ENCODE measurements at regions of chr3 and their contacts with region 1.

Region 1: DNA sequence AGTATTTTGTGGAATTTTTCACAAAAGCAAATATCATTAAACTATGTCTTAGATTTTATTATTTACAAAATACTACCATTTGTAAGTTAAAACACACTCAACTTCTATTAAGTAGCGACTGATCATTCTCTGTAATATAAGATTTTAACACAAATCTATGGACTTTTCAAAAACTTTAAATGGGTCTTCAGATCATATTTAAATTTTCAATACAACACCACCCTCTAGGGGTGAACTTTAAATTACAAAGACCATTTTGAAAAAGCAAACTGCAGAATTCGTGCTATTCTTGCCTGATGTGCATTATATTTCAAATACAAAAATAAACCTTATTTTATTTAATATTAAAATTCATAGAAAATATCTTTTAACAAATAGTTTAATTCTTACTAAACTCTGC is 8.2 kb upstream of the VGLL4 start:
- DNase-seq: no peak
- H3K4me3 ChIP-seq: no peak overlapping the region
- H3K27ac ChIP-seq: no peak overlapping the region
- H3K4me1 ChIP-seq: peaks cover 0 to 6% (median 2%) of the 10 kb centered on the region in 6 donors
- H3K27me3 ChIP-seq: no peaks in the 10 kb centered on the region
- CTCF ChIP-seq: peak; percentile 15 to 72 (median 60)
- POLR2A ChIP-seq: no peak

Region 2: GRCh38 chr3:11236595-11237461 is 415.1 kb before region 1 on chr3:
- intact Hi-C with region 1: loop called (anchors 10 kb)
- DNase-seq: peak; percentile 88
- H3K4me3 ChIP-seq: no peak overlapping the region
- H3K27ac ChIP-seq: no peak overlapping the region
- H3K4me1 ChIP-seq: peaks cover 0 to 8% (median 2%) of the 10 kb centered on the region in 6 donors
- H3K27me3 ChIP-seq: peaks cover 0 to 22% (median 0%) of the 10 kb centered on the region in 7 donors
- CTCF ChIP-seq: peak; percentile 29 to 87 (median 77)
- POLR2A ChIP-seq: no peak

Region 3: GRCh38 chr3:11379233-11379823 is 272.6 kb before region 1 on chr3:
- intact Hi-C with region 1: loop called (anchors 2 kb)
- DNase-seq: no peak
- H3K4me3 ChIP-seq: peak overlapping the region in 2 of 8 donors; percentile 4 to 16
- H3K27ac ChIP-seq: peak overlapping the region in 6 of 8 donors; percentile 14 to 68 (median 45)
- H3K4me1 ChIP-seq: peaks cover 0 to 23% (median 4%) of the 10 kb centered on the region in 6 donors
- H3K27me3 ChIP-seq: no peaks in the 10 kb centered on the region
- CTCF ChIP-seq: peak in 10 of 11 experiments; percentile 30 to 77 (median 60)
- POLR2A ChIP-seq: no peak

Region 4: GRCh38 chr3:11803977-11804892 is 152.3 kb after region 1 on chr3:
- intact Hi-C with region 1: loop called (anchors 5 kb)
- DNase-seq: no peak
- H3K4me3 ChIP-seq: no peak overlapping the region
- H3K27ac ChIP-seq: no peak overlapping the region
- H3K4me1 ChIP-seq: no peaks in the 10 kb centered on the region
- H3K27me3 ChIP-seq: no peaks in the 10 kb centered on the region
- CTCF ChIP-seq: peak; percentile 38 to 72 (median 63)
- POLR2A ChIP-seq: no peak

Region 5: DNA sequence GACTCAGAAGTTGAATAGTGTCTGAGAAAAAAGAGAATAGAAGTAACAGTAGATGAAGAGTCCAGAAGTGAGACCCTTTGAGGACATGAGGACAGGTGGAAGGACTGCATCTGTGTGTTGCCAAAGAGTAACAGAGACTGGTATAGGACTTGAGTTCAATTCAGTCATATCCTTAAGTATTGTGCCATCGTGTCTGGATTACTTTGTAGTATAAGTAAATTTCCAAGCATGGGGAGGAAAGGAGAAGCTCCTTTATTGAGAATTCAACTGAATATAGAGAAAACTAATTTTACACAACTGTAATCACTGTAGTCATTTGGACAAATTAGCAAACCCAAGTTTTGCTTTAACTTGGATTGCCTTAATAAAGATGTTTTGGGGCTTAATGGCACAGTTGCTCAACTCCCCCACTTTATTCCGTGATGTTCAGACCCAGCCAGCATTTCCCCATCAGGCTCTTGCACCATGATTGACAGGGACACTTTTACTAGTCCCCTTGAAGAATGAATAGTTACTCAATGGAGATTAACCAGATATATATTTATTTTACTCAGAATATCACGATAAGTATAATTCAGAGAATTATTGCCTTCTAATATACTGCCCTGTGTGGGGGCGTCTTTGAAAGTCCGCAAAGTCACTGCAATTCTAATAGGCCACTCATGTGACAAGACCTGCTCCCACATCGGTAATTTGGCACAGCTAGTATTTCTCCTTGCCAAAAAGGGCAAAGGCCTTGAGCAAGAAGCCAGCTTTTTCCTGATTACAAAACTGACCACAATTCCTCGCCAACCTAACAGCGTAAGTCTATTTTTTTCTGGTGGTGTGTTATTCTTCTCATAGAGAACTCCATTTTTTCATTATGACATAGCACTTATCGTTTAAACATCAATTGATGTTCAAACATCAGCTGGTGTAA is 698.3 kb after region 1 on chr3:
- intact Hi-C with region 1: no loop called
- DNase-seq: no peak
- H3K4me3 ChIP-seq: no peak overlapping the region
- H3K27ac ChIP-seq: peak overlapping the region in 6 of 8 donors; percentile 33 to 72 (median 58)
- H3K4me1 ChIP-seq: peaks cover 10 to 49% (median 33%) of the 10 kb centered on the region in 6 donors
- H3K27me3 ChIP-seq: no peaks in the 10 kb centered on the region
- CTCF ChIP-seq: no peak
- POLR2A ChIP-seq: no peak